CD8-positive, alpha-beta memory T cell (primary cell): ENCODE measurements at regions of chr11 and their contacts with region 1.

Region 1: DNA sequence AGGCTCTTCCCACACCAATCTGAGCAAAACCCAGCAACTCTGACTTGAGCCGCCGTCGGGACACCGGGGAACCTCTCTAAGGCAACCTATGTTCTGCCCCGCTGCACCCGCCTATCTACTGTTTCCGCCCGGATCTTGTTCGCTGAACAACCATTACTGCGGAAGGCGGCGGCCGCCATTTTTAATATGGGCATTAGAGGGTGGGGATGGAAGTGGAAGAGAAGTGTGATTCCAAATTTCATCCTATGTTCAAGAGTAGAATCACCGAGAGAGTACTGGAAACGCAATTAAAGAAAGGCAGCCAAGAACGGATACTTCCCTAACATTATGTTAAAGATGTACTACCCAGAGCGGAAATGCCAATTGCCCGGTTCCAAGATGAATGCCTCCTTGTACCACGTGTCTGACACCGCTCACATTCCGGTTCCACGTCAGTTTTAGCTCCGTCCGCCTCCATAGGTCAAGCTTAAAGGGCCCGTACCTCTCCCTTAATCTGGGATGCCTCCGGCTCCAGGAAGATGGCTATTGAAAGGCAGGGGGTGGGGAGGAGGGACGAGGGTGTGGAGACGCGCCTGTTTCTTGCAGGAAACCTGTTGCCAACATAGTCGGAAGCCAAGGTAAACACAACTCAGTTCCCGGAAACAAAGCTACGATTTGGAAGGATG is at the start of gene DPAGT1:
- DNase-seq: peak; percentile 73 to 88 (median 82)
- H3K4me3 ChIP-seq: peak within 1 kb of the TSS; percentile 97
- H3K4me3 Mint-ChIP-seq: peak within 1 kb of the TSS; percentile 88 to 99 (median 98)
- H3K27ac ChIP-seq: peak within 1 kb of the TSS; percentile 95
- H3K27ac Mint-ChIP-seq: peak within 1 kb of the TSS; percentile 93 to 100 (median 98)
- H3K4me1 ChIP-seq: peaks cover 38% of the 10 kb centered on the region
- H3K4me1 Mint-ChIP-seq: peaks cover 41 to 66% (median 61%) of the 10 kb centered on the region in 3 donors
- H3K27me3 ChIP-seq: no peaks in the 10 kb centered on the region
- H3K27me3 Mint-ChIP-seq: no peaks in the 10 kb centered on the region
- total RNA-seq, gene DPAGT1: 69.7 to 78.6 TPM

Region 2: GRCh38 chr11:119115484-119116234 is 13.8 kb after region 1 on chr11:
- CTCF ChIA-PET with region 1: interaction called, 9 read pairs
- POLR2A ChIA-PET with region 1: interaction called, 21 read pairs
- DNase-seq: peak in 2 of 5 donors; percentile 26 to 75
- H3K4me3 ChIP-seq: no peak overlapping the region
- H3K4me3 Mint-ChIP-seq: peak overlapping the region; percentile 26 to 85 (median 78)
- H3K27ac ChIP-seq: peak overlapping the region; percentile 5
- H3K27ac Mint-ChIP-seq: peak overlapping the region; percentile 71 to 95 (median 92)
- H3K4me1 ChIP-seq: peaks cover 35% of the 10 kb centered on the region
- H3K4me1 Mint-ChIP-seq: peaks cover 18 to 22% (median 19%) of the 10 kb centered on the region in 3 donors
- H3K27me3 ChIP-seq: no peaks in the 10 kb centered on the region
- H3K27me3 Mint-ChIP-seq: no peaks in the 10 kb centered on the region

Region 3: GRCh38 chr11:119121008-119121810 is 19.3 kb after region 1 on chr11 and contains the start of gene HINFP:
- CTCF ChIA-PET with region 1: interaction called, 9 read pairs
- POLR2A ChIA-PET with region 1: interaction called, 21 read pairs
- DNase-seq: peak; percentile 98 to 100 (median 100)
- H3K4me3 ChIP-seq: peak within 1 kb of the TSS; percentile 91
- H3K4me3 Mint-ChIP-seq: peak within 1 kb of the TSS; percentile 85 to 95 (median 94)
- H3K27ac ChIP-seq: peak within 1 kb of the TSS; percentile 78
- H3K27ac Mint-ChIP-seq: peak within 1 kb of the TSS; percentile 72 to 97 (median 96)
- H3K4me1 ChIP-seq: peaks cover 27% of the 10 kb centered on the region
- H3K4me1 Mint-ChIP-seq: peaks cover 30 to 42% (median 40%) of the 10 kb centered on the region in 3 donors
- H3K27me3 ChIP-seq: no peaks in the 10 kb centered on the region
- H3K27me3 Mint-ChIP-seq: peaks cover 0 to 2% of the 10 kb centered on the region in 2 donors
- total RNA-seq, gene HINFP: 26.8 to 29.1 TPM